ENCODE measurements at regions of chr10 and their contacts with region 1.

Region 1: DNA sequence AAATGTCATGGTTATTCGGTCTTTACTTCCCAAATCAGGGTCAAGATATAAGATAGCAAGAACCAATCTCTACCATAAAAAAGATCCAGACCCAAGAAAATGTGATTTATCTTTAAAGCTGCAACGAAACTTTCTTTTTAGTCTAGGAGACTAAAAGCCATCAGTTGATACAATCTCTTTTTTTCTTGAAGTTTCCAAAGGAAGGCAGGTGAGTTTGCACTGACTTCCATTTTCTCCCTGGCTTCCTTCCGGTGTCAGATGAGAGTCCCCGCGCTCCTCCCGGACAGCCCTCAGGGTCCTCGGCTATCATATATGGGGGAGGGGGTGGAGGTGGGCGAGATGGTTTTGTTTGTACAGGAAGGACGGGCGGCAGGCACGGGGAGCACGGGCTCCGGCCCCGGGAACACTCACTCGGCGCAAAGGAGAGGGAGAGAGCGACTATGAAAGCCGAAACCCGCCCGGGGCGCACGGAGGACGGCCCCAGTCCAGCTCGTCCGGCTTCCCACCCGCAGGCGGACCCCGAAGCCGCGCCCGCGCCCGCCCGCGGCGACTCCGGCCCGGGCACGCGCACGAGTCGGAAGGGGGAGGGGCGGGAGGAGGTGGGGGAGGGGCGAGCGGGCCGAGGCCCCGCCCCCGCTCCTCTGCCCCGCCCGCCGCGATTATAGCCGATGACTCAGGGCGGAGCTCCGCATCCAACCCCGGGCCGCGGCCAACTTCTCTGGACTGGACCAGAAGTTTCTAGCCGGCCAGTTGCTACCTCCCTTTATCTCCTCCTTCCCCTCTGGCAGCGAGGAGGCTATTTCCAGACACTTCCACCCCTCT is at the start of gene BAG3:
- DNase-seq: peak; percentile 95 to 99
- ATAC-seq: peak; percentile 79 to 88 (median 84)
- H3K4me3 ChIP-seq: peak within 1 kb of the TSS; percentile 86
- H3K27ac ChIP-seq: peak within 1 kb of the TSS; percentile 99
- H3K4me1 ChIP-seq: peaks cover 13% of the 10 kb centered on the region
- H3K27me3 ChIP-seq: no peaks in the 10 kb centered on the region
- CTCF ChIP-seq: no peak
- total RNA-seq, gene BAG3: 354 to 855 (median 486) TPM

Region 2: DNA sequence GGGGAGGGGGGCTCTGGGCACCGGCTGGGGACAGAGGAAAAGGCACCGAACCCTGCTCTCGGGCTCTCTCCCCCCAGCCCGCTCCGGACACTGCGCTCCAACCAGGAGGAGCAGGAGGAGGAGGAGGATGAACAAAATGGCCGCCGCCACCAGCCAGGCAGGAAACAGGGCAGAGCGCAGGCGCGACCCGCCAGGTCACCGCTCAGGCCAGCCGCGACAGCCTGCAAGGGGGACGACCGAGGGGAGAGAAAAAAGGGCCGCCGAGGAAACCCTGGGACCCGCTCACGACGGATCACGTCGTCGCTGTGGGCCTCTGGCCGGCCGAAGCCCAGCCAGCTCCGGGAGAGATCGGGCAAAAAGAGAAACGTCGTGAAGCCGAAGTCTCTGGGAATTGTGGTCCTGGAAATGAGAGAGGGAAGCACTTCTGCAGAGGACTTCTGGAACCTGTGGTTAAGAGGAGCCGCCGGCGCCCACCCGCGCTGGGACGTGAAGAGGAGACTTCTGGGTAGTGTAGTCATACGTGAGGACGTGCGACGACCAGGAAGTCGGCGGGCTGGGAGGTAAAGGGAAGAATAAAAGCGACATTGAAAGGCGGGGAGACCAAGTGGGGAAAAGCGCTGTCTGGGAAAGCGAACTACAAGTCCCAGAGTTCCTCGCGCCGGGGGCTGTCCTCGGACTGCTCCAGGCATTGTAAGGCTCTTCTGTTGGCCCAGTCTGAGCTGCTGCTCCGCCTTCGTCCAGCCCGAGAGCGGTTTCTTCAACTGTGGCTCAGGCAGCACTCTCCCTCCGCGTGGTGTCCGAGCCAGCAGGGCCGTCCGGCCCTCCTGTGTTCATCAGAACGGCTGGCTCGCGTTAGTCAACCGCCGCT is 54.1 kb before region 1 on chr10 and contains the start of gene TIAL1:
- intact Hi-C with region 1: loop called (anchors 1 to 5 kb)
- DNase-seq: peak; percentile 98 to 99
- ATAC-seq: peak; percentile 89 to 93 (median 91)
- H3K4me3 ChIP-seq: peak within 1 kb of the TSS; percentile 91
- H3K27ac ChIP-seq: peak within 1 kb of the TSS; percentile 98
- H3K4me1 ChIP-seq: peaks cover 44% of the 10 kb centered on the region
- H3K27me3 ChIP-seq: no peaks in the 10 kb centered on the region
- CTCF ChIP-seq: no peak
- total RNA-seq, gene TIAL1: 57.7 to 106 (median 81.8) TPM

Region 3: GRCh38 chr10:119608316-119609155 is 42.4 kb before region 1 on chr10:
- intact Hi-C with region 1: loop called in 1 of 2 experiments (anchors 2 kb)
- DNase-seq: peak; percentile 43 to 78
- ATAC-seq: peak; percentile 89 to 98 (median 94)
- H3K4me3 ChIP-seq: peak overlapping the region; percentile 34
- H3K27ac ChIP-seq: no peak overlapping the region
- H3K4me1 ChIP-seq: peaks cover 7% of the 10 kb centered on the region
- H3K27me3 ChIP-seq: no peaks in the 10 kb centered on the region
- CTCF ChIP-seq: peak; percentile 77

Region 4: DNA sequence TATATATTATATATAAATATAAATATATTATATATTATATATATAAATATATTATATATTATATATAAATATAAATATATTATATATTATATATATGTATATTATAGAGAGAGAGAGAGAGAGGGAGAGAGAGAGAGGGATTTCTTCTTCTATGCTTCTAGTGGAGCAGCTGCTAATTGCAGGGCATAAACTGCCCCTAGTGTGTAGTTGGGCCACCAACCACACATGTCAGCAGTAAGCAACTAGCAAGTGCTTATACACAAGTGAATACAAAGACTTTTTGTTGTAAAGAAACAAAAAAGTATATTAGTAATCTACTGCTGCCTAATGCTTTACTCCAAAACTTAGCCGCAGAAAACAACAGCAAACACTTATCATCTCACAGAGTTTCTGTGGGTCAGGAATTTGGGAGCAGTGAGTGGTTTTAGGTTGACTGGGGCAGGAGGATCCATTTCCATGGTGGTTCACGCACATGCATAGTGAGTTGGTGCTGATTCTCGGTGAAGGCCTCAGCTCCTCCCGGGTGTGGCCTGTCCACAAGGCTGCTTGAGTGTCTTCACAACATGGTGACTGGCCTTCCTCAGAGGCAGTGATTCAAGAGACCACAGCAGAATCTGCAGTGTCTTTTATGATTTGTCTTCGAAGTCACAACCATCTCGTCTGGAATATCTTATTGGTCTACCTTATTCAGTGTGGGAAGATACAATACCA is 25.2 kb before region 1 on chr10:
- intact Hi-C with region 1: loop called in 1 of 2 experiments (anchors 2 kb)
- DNase-seq: no peak
- ATAC-seq: no peak
- H3K4me3 ChIP-seq: no peak overlapping the region
- H3K27ac ChIP-seq: no peak overlapping the region
- H3K4me1 ChIP-seq: peaks cover 2% of the 10 kb centered on the region
- H3K27me3 ChIP-seq: no peaks in the 10 kb centered on the region
- CTCF ChIP-seq: no peak

Region 5: GRCh38 chr10:119667562-119668328 is 16.8 kb after region 1 on chr10:
- intact Hi-C with region 1: loop called in 1 of 2 experiments (anchors 2 kb)
- DNase-seq: peak; percentile 90 to 96
- ATAC-seq: peak; percentile 74 to 82 (median 78)
- H3K4me3 ChIP-seq: peak overlapping the region; percentile 53
- H3K27ac ChIP-seq: peak overlapping the region; percentile 99
- H3K4me1 ChIP-seq: peaks cover 80% of the 10 kb centered on the region
- H3K27me3 ChIP-seq: no peaks in the 10 kb centered on the region
- CTCF ChIP-seq: peak; percentile 23

Region 6: DNA sequence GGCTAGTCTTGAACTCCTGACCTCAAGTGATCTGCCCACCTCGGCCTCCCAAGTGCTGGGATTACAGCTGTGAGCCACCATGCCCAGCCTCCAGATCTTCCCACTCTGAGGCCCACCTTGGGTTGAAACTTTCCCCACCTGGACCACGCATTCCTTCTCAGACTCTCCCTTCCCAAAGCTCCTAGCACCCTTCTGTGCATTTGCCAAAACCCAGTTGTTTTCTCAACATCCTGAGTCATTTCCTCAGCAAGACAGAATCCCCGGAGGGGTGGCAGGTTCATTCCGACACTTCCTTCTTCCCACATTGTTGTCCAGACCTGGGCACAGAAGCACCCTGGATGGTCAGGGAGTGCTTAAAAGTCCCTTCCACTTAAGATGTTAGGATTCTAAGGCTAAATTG is 29.1 kb after region 1 on chr10:
- intact Hi-C with region 1: loop called in 1 of 2 experiments (anchors 2 kb)
- DNase-seq: peak in 1 of 2 donors; percentile 60
- ATAC-seq: peak in 2 of 4 donors; percentile 3 to 7
- H3K4me3 ChIP-seq: no peak overlapping the region
- H3K27ac ChIP-seq: peak overlapping the region; percentile 90
- H3K4me1 ChIP-seq: peaks cover 65% of the 10 kb centered on the region
- H3K27me3 ChIP-seq: no peaks in the 10 kb centered on the region
- CTCF ChIP-seq: no peak